Kidney (tissue), 22 donors: ENCODE measurements at regions of chr11 and their contacts with region 1.

Region 1: GRCh38 chr11:95076416-95076815 is 9.7 kb downstream of the SRSF8 start:
- DNase-seq: peak in 2 of 5 donors; percentile 42 to 62
- H3K4me3 ChIP-seq: no peak overlapping the region
- H3K27ac ChIP-seq: peak overlapping the region; percentile 76 to 78
- H3K4me1 ChIP-seq: peaks cover 11 to 31% (median 19%) of the 10 kb centered on the region in 3 donors
- H3K27me3 ChIP-seq: no peaks in the 10 kb centered on the region
- CTCF ChIP-seq: no peak

Region 2: DNA sequence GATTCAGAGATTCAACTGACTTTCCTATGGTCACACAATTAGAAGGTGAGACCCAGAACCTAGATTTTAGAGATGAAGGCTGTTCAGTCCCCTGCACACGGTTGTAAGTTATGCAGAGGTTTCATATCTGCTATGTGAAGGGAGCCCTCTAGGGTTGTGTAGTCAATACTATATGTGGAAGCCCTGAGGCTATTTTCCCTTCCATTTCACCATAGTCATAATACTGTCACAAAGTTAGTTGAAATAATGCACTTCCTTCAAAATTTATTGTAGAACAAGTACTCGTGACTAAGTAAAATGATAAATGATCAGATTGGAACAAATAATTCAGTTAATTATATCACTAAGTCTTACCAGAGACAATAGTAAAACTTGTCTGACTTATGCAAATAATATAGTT is 62.0 kb after region 1 on chr11:
- intact Hi-C with region 1: loop called (anchors 10 kb)
- DNase-seq: peak in 2 of 5 donors; percentile 36 to 57
- H3K4me3 ChIP-seq: no peak overlapping the region
- H3K27ac ChIP-seq: no peak overlapping the region
- H3K4me1 ChIP-seq: peaks cover 0 to 5% (median 0%) of the 10 kb centered on the region in 3 donors
- H3K27me3 ChIP-seq: no peaks in the 10 kb centered on the region
- CTCF ChIP-seq: peak; percentile 32